Activated CD8-positive, alpha-beta memory T cell treated with anti-CD3 and anti-CD28 coated beads, Interleukin-2, amount 10 ng/mL, durations not matched to agents 7 days and 5 days (primary cell): ENCODE measurements at regions of chr6 and their contacts with region 1.

Region 1: DNA sequence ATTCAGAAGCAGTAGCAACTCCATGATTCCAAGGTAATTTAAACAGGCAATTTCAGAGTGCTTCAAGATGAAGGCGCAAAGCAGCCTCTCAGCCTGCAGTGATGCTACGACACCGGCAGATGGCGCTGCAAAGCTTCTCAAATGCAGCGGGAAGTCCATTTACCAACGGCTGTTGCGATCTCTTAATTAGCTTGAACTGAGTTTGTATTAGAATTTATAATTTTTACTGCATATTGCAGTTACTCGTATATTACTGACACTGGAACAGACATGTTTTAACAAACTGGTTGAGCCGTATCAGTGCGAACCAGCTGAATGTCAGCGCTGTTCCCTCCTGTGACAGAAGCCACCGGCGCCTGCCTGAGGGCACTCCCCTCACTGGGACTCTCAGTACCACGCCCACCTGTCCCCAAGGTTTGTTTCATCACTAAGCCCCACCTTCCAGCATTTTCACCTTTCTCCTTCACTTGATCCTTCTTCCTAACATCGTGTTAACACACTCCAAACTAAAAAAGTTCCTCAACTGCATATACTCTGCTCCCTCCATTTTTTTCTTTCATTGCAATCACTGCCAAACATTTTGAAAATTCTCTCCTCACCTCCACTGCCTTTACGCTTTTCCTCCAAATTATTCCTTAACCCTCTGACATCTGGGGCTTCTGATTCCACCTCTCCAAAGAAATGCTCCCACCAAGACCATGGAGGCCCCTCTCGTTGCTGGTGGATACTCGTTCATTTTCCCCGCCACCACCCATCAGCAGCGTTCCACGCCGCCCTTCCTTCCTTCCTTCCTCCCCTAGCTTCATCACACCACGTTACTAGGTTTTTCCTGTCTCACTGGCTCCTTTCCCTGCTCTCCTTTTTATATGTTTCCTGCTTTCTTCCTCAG is 14.5 kb downstream of the GNL1 start:
- DNase-seq: peak; percentile 89
- ATAC-seq: peak; percentile 89
- H3K4me3 Mint-ChIP-seq: peak overlapping the region; percentile 76
- H3K27ac Mint-ChIP-seq: peak overlapping the region; percentile 87
- H3K4me1 Mint-ChIP-seq: peaks cover 32% of the 10 kb centered on the region
- H3K27me3 Mint-ChIP-seq: no peaks in the 10 kb centered on the region

Region 2: GRCh38 chr6:30489081-30490025 is 52.4 kb before region 1 on chr6 and contains the start of gene HLA-E:
- CTCF ChIA-PET with region 1: interaction called, 305 read pairs
- DNase-seq: peak; percentile 96
- ATAC-seq: peak; percentile 83
- H3K4me3 Mint-ChIP-seq: peak within 1 kb of the TSS; percentile 99
- H3K27ac Mint-ChIP-seq: peak within 1 kb of the TSS; percentile 98
- H3K4me1 Mint-ChIP-seq: peaks cover 50% of the 10 kb centered on the region
- H3K27me3 Mint-ChIP-seq: peaks cover 2% of the 10 kb centered on the region
- total RNA-seq, gene HLA-E: 395 to 602 TPM

Region 3: DNA sequence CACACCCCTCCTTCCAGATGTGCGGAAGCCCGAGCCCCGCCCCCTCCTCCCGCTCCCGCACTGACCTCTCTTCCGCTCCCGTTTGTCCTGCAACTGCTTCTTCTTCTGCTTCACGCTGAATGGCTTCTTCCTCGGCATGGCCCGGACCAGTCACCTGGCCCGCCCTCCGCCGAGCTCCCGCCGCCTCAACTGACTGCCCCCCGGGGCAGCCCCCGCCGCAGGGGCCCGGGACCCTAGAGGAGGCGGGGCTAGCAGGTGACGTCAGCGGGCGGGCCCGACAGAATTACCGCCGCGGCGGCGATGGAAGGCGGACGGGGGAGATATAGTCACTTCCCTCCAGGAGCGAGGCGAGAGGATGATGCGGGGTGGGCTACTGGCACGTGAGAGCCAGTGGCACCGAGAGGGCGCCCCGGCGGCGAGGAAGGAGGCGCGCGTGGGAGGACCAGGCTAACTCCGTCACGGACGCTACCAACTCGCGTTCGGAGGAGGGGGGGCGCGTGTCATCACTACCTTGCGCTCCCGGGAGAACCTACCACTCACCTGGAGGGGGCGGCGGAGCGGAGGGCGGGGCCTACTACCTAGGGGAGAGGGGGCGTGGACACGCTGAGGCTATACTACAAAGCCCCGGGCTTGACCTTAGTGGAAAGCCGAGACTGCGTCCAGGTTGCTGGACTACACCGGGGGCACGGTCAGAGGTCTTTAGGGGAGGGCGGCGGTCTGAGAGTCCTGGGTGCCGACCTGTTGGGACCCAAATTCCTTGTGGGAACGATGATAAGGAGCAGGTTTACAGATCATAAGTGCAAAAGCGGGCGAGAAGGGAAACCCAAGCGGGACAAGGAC is 14.5 kb after region 1 on chr6 and contains the start of gene GNL1:
- CTCF ChIA-PET with region 1: interaction called, 100 read pairs
- DNase-seq: peak; percentile 99
- ATAC-seq: peak; percentile 90
- H3K4me3 Mint-ChIP-seq: peak within 1 kb of the TSS; percentile 98
- H3K27ac Mint-ChIP-seq: peak within 1 kb of the TSS; percentile 100
- H3K4me1 Mint-ChIP-seq: peaks cover 34% of the 10 kb centered on the region
- H3K27me3 Mint-ChIP-seq: no peaks in the 10 kb centered on the region
- total RNA-seq, gene GNL1: 64.0 to 73.5 TPM

Region 4: GRCh38 chr6:30578051-30578450 is 36.3 kb after region 1 on chr6:
- CTCF ChIA-PET with region 1: interaction called, 13 read pairs
- DNase-seq: no peak
- ATAC-seq: no peak
- H3K4me3 Mint-ChIP-seq: no peak overlapping the region
- H3K27ac Mint-ChIP-seq: no peak overlapping the region
- H3K4me1 Mint-ChIP-seq: peaks cover 25% of the 10 kb centered on the region
- H3K27me3 Mint-ChIP-seq: no peaks in the 10 kb centered on the region

Region 5: DNA sequence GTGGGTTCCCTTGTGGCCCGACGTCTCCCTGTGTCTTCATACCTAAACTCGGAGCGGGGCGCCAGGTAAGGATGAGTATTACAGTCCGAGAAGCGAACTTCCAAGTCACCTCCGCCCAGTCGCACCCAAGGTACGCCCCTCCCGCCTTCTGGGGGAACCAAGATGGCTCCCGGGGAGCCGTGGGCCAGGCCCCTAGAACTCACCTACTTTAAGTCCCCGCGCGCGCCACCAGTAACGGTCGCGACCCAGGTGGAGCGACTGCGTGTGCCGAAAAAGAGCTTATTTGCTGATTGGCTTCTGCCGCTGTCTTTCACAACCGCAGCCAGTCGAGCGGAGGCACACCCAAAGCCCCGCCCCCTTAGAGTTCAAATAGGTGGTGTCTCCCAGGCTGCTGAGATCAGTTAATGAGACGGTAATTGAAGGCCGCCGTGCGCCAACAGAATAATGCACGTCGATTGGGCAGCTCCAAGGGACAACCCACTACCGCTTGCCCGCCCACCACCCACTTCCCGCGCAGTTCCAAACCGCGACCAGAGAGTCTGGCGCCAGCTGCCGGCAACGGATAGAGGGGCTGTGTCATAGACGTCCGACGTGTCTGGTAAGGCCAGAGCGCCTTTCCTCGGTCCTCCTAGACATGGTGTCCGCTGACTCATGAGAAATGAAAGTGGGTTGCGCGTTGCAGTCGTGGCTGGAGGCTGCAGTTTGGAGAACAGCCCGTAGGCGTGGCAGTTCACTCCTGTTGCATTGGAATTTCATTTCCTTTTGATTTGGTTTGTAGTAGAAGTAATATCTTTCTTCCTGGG is 175.5 kb after region 1 on chr6 and contains the start of gene MDC1:
- CTCF ChIA-PET with region 1: interaction called, 14 read pairs
- DNase-seq: peak; percentile 100
- ATAC-seq: peak; percentile 79
- H3K4me3 Mint-ChIP-seq: peak within 1 kb of the TSS; percentile 99
- H3K27ac Mint-ChIP-seq: peak within 1 kb of the TSS; percentile 100
- H3K4me1 Mint-ChIP-seq: peaks cover 52% of the 10 kb centered on the region
- H3K27me3 Mint-ChIP-seq: no peaks in the 10 kb centered on the region
- total RNA-seq, gene MDC1: 67.4 to 83.9 TPM

Region 6: GRCh38 chr6:30883685-30884520 is 342.1 kb after region 1 on chr6 and contains the start of gene DDR1:
- CTCF ChIA-PET with region 1: no interaction called
- DNase-seq: peak; percentile 54
- ATAC-seq: peak; percentile 85
- H3K4me3 Mint-ChIP-seq: peak within 1 kb of the TSS; percentile 66
- H3K27ac Mint-ChIP-seq: no peak within 1 kb of the TSS
- H3K4me1 Mint-ChIP-seq: peaks cover 11% of the 10 kb centered on the region
- H3K27me3 Mint-ChIP-seq: peaks cover 21% of the 10 kb centered on the region
- total RNA-seq, gene DDR1: 3.8 to 4.9 TPM